Tibial artery (tissue), 4 donors: ENCODE measurements at regions of chr15 and their contacts with region 1.

Region 1: GRCh38 chr15:101008158-101009139 is 89.3 kb downstream of the LRRK1 start:
- DNase-seq: peak; percentile 71 to 85
- H3K4me3 ChIP-seq: peak overlapping the region; percentile 44 to 48
- H3K27ac ChIP-seq: no peak overlapping the region
- H3K4me1 ChIP-seq: peaks cover 0 to 19% (median 7%) of the 10 kb centered on the region in 4 donors
- H3K27me3 ChIP-seq: no peaks in the 10 kb centered on the region
- CTCF ChIP-seq: peak; percentile 83 to 99

Region 2: GRCh38 chr15:100627789-100628395 is 380.6 kb before region 1 on chr15:
- intact Hi-C with region 1: loop called (anchors 5 kb)
- DNase-seq: peak in 1 of 2 donors; percentile 43
- H3K4me3 ChIP-seq: no peak overlapping the region
- H3K27ac ChIP-seq: no peak overlapping the region
- H3K4me1 ChIP-seq: no peaks in the 10 kb centered on the region
- H3K27me3 ChIP-seq: no peaks in the 10 kb centered on the region
- CTCF ChIP-seq: peak; percentile 73 to 84

Region 3: DNA sequence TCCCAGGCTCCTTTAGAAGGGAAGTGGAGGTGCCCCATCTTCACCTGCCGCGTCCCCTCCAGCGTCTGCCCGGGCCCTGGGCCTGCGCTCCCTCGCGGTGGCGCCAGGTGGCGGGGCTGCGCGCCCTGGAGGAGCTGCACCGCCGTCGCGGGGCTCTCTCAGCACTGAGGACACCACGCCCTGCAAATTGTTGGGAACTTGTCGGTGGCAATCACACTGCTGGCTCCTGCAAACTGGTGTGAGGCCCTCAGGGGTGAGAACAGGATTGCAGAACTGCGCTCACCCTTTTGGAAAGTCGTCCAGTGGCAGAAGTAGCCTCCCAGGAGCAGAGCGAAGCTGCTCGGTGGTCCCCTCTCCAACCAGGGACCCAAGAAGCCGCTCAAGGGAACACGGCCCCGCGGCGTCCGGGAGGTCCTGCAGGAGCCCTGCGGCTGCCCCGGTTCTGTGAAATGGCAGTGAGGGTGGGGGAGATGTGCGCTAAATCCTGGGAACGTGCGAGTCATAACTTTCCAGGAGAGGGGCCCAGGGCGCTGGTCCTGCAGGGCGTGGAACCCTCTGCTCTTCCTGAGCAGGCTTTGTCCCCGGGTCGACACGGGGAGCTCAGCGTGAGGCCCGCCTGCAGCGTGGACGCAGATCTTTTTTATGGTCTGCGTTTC is 90.3 kb before region 1 on chr15:
- intact Hi-C with region 1: loop called (anchors 5 kb)
- DNase-seq: peak; percentile 79 to 86
- H3K4me3 ChIP-seq: peak overlapping the region; percentile 61 to 82
- H3K27ac ChIP-seq: peak overlapping the region in 1 of 2 donors; percentile 65
- H3K4me1 ChIP-seq: peaks cover 0 to 27% (median 0%) of the 10 kb centered on the region in 4 donors
- H3K27me3 ChIP-seq: peaks cover 0 to 8% of the 10 kb centered on the region in 2 donors
- CTCF ChIP-seq: peak; percentile 86 to 90